ENCODE measurements at regions of chr17 and their contacts with region 1.

Region 1: DNA sequence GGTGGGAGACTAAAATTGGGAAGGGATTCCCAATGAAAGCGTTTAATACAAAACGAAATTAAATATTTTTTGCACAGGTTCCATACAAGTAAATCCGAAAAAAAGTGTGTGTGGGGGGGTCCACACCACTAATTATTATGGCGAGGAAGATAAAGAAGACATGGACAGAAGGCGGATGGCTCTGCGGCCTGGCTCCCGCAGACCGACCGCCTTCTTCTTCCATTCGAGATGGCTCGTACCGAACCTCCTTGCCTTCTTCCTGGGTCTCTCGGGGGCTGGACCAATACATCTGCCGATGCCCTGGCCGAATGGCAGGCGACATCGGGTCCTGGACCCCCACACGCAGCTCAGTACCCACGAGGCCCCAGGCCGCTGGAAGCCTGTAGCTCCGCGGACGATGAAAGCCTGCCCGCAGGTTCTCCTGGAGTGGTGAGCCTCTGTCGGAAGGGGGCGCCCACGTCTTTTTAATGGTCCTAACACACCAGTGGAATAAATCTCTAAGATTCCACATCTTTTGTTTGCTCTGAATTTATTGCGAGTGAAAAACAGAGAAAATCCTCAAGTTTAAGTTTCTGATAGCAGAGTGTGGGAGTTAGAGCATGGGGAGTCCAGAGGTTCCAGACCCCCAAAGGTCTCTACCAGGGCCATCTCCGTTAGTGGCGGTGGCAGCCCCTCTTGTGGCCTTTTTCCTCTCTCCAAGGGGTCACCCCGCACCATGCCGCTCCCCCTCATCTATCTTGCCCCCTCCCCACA is 1.4 kb downstream of the PRAC2 start:
- DNase-seq: peak; percentile 82
- H3K4me3 Mint-ChIP-seq: no peak overlapping the region
- H3K27ac Mint-ChIP-seq: no peak overlapping the region
- H3K4me1 Mint-ChIP-seq: peaks cover 36% of the 10 kb centered on the region
- H3K27me3 Mint-ChIP-seq: peaks cover 96% of the 10 kb centered on the region

Region 2: GRCh38 chr17:48543107-48543853 is 181.1 kb before region 1 on chr17:
- CTCF ChIA-PET with region 1: no interaction called
- POLR2A ChIA-PET with region 1: no interaction called
- DNase-seq: peak; percentile 69
- H3K4me3 Mint-ChIP-seq: peak overlapping the region; percentile 89
- H3K27ac Mint-ChIP-seq: peak overlapping the region; percentile 95
- H3K4me1 Mint-ChIP-seq: peaks cover 55% of the 10 kb centered on the region
- H3K27me3 Mint-ChIP-seq: peaks cover 32% of the 10 kb centered on the region

Region 3: DNA sequence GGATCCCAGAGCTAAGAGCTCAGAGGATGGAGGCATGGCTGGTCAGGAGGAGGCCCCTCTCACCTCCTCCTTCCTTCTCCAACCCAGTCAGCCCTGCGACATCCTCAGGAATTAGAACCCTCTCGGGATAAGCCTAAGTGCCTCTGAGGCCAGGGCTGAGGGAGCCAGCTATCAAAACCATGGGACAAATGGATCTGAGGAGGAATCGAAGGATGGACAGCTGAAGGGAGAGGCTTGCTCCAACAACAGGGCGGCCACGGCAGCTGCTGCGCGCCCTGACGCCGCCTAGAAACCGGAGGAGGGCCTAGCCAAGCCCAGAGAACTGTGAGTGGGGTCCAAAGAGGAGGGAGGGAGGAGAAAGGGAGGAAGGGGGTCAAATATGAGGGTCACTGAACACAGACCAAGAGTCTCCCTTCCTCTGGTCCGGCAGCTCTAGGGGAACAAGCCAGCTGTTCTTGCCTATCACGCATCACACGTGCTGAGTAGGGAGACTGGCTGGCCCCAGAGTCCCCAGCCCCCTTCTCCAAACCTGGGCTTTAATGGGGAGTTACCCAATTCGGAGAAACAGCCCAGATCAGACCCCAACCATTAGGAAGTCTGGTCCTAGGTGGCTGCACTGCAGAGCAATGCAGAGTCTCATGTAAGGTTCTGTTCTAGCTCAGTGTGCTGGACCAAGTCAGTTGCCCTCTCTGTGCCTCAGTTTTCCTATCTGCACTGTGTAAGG is 10.1 kb after region 1 on chr17:
- CTCF ChIA-PET with region 1: interaction called, 10 read pairs
- POLR2A ChIA-PET with region 1: interaction called, 4 read pairs
- DNase-seq: no peak
- H3K4me3 Mint-ChIP-seq: no peak overlapping the region
- H3K27ac Mint-ChIP-seq: no peak overlapping the region
- H3K4me1 Mint-ChIP-seq: peaks cover 15% of the 10 kb centered on the region
- H3K27me3 Mint-ChIP-seq: peaks cover 94% of the 10 kb centered on the region

Region 4: GRCh38 chr17:48745381-48746275 is 21.2 kb after region 1 on chr17:
- CTCF ChIA-PET with region 1: interaction called, 26 read pairs
- POLR2A ChIA-PET with region 1: interaction called, 7 read pairs
- DNase-seq: no peak
- H3K4me3 Mint-ChIP-seq: no peak overlapping the region
- H3K27ac Mint-ChIP-seq: no peak overlapping the region
- H3K4me1 Mint-ChIP-seq: peaks cover 2% of the 10 kb centered on the region
- H3K27me3 Mint-ChIP-seq: peaks cover 92% of the 10 kb centered on the region

Region 5: GRCh38 chr17:48751172-48751571 is 26.7 kb after region 1 on chr17:
- CTCF ChIA-PET with region 1: interaction called, 26 read pairs
- POLR2A ChIA-PET with region 1: interaction called, 7 read pairs
- DNase-seq: no peak
- H3K4me3 Mint-ChIP-seq: no peak overlapping the region
- H3K27ac Mint-ChIP-seq: no peak overlapping the region
- H3K4me1 Mint-ChIP-seq: peaks cover 2% of the 10 kb centered on the region
- H3K27me3 Mint-ChIP-seq: peaks cover 91% of the 10 kb centered on the region

Measured in activated CD4-positive, alpha-beta memory T cell treated with anti-CD3 and anti-CD28 coated beads, Interleukin-2, amount 10 ng/mL, durations not matched to agents 7 days and 5 days (primary cell).